Lower leg skin (tissue), 4 donors: ENCODE measurements at regions of chr12 and their contacts with region 1.

Region 1: DNA sequence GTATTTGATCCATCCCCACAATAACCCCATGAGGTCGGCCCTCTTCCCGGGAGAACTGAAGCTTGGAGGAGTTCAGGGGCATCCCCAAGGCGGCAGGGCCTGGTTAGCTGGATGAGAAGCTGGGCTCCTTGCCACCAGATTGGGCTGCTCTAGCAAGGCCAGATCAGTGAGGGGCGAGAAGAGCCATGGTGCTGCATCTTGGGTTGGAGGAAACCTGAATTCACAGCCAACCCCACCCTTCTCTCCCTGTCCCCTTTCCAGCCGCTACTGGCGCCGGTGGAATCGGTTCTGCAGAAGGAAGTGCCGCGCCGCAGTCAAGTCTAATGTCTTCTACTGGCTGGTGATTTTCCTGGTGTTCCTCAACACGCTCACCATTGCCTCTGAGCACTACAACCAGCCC is 228.6 kb upstream of the FKBP4 start:
- DNase-seq: peak in 1 of 2 donors; percentile 60
- H3K4me3 ChIP-seq: no peak overlapping the region
- CTCF ChIP-seq: no peak
- POLR2A ChIP-seq: no peak

Region 2: GRCh38 chr12:2256915-2257314 is 309.2 kb before region 1 on chr12:
- intact Hi-C with region 1: loop called (anchors 5 kb)
- DNase-seq: no peak
- H3K4me3 ChIP-seq: no peak overlapping the region
- CTCF ChIP-seq: no peak
- POLR2A ChIP-seq: no peak

Region 3: GRCh38 chr12:2402073-2402579 is 164.0 kb before region 1 on chr12:
- intact Hi-C with region 1: no loop called
- DNase-seq: no peak
- H3K4me3 ChIP-seq: no peak overlapping the region
- CTCF ChIP-seq: no peak
- POLR2A ChIP-seq: no peak

Region 4: DNA sequence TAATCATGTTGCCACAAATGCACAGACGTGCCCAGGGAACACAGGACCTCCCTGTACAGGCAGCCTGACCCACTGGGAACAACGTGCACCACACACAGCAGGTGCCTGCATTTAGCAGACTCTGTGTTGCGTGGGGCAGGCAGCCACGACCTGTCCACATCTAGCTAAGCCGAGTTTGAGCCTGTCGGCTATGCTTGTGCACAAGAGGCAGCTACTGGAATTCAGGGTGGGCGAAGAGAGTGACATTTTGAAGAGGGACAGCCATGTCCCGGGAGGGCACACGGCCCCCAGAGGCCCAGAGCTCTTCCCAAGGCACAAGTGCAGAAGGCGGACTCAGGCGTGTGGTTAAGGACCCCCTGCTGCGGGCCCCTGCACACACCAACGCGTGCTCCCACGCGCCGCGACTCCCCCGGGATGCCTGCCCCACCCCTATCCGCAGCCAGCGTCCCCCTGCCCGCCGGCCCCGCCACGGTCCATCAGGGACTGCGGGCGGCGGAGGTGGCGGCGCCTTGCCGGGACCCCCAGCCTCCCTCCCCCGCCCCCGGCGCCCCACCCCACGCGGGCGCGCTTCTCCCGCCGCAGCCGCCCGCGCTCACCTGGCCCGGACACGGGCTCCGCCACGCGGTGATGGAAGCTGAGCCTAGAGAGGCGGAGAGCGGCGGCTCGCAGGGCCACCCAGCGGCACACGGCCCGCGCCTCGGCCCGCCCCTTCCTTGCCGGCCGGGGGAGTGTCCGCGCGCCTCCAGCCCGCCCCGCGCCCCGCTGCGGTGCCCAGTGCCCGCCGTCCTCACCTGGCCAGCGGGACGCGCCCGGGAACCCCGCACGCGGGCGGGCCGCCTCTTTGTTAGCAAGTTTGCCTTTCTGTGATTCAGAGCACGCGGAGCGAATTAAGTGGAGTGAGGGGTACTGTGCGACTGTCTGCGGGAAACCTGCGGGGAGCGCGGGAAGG is 799.6 kb after region 1 on chr12:
- intact Hi-C with region 1: no loop called
- DNase-seq: no peak
- H3K4me3 ChIP-seq: no peak overlapping the region
- CTCF ChIP-seq: no peak
- POLR2A ChIP-seq: no peak